Left colon (tissue), 2 donors: ENCODE measurements at regions of chr14 and their contacts with region 1.

Region 1: DNA sequence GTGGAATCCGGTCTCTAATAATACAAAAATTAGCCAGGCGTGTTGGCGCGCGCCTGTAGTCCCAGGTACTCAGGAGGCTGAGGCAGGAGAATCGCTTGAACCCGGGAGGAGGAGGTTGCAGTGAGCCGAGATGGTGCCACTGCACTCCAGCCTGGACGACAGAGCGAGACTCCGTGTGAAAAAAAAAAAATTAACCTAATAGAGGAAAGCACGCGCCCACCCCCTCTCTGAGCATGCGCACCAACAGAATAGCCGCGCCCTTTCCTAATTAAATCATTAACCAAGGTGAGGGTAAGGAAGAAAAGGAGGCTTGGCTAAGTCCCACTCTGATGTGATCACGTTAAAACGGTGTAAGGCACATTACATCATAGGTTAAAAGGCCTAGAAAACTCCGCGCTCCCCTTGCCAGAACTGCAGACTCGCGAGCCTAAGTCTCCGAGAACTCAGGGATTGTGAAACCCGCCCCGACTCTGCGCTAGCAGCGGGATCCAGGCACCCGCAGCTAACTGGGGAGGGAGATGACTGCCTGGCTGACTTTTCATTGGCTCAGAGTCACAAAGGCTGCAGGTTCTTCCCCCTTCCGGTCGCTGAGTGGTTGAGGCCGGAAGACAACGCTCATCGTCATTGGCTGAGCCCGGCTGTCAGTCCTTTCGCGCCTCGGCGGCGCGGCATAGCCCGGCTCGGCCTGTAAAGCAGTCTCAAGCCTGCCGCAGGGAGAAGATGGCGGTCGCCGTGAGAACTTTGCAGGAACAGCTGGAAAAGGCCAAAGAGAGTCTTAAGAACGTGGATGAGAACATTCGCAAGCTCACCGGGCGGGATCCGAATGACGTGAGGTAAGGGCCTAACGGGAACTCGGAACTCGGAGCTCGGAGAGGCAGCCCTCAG is at the start of gene PNN:
- DNase-seq: peak; percentile 95 to 98
- ATAC-seq: peak; percentile 87
- total RNA-seq, gene PNN: 36.6 to 49.4 TPM

Region 2: GRCh38 chr14:38941485-38941884 is 233.3 kb before region 1 on chr14:
- intact Hi-C with region 1: no loop called
- DNase-seq: no peak
- ATAC-seq: no peak

Region 3: DNA sequence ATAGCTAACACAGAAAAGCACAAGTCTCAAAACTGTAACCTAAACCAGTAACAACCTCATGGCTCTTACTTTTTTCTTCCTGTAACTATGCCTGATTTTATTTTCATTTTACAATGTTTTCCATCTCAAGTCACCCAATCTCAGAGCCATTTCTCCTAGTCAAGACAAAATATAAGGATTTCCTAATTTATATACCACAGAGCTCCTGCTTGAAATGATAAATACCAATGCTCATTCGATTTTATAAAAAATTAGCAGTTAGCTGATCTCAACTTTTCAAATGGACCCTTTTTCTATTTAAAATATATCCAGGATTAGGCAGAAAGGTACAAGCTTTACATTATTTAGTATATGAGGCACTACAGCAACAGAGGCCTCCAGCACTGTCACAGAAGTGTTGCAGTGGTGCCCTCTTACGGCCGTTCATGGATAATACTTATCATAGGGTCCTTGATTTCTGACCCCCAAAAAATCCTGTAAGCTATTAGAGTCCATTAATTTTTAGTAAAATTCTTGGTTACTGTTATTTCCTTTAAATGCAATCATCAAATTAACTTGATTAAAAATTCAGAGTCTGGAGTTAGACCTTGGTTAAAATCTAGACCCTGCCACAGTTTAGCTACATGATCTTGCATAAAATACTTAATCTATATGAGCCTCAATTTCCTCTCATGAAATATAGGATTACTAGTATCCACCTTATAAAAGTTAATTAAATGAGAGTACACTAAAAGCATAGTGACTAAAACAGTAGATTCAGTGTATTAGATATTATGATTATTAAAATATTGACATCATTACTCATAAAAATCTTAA is 140.1 kb before region 1 on chr14:
- intact Hi-C with region 1: no loop called
- DNase-seq: no peak
- ATAC-seq: peak; percentile 61

Region 4: DNA sequence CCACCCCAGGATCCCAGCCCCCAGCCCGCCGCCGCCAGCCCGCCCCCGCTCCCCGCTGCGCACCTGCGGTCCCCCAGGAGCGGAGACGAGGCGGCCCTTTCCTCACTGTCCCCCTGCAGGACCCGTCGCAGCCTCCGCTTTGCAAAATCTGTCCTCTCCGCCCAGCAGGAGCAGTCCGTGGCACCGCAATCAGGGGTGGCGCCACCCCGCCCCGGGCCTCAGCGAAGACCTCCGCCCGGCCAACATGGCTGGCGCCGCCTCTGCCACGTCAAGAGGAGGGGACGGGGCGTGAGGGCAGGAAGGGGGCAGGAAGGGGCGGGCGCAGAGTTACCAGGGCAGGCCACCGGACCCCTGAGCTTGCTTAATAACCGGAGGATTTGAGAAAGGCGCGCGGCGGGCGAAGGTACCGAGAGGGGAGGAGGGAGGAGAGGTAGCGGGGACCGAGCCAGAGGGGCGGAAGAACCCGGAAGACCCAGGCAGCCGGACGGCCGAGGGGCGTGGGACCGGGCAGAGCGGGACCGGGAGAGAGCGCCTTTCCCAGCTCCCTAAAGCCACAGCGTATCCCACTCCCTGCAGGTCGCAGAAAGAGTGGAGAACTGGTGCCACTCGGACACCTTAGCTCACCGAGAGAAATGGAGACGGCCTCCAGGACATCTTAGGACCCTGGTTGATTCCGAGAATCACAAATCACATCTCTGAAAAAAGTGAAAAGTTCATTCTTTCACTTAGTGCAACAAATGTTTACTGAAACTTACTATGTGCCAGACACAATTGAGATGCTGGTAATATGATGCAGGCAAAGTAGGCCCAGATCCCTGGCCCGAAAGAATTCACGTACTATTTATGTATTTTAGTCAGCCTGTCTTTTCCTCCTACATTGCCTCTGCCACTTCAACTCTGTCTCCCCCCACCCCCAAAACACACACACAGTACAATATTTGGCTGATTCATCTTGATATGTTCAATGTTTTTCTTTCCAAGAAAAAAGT is 71.5 kb before region 1 on chr14 and contains the start of gene SEC23A:
- intact Hi-C with region 1: loop called in 1 of 2 experiments (anchors 5 kb)
- DNase-seq: peak; percentile 94 to 95
- ATAC-seq: peak; percentile 88
- total RNA-seq, gene SEC23A: 111 to 121 TPM

Region 5: GRCh38 chr14:39266871-39267591 is 92.2 kb after region 1 on chr14:
- intact Hi-C with region 1: loop called in 1 of 2 experiments (anchors 5 kb)
- DNase-seq: peak; percentile 88
- ATAC-seq: peak; percentile 90